Activated naive CD4-positive, alpha-beta T cell treated with anti-CD3 and anti-CD28 coated beads, Interleukin-2, amount 10 ng/mL, durations not matched to agents 7 days and 5 days (primary cell): ENCODE measurements at regions of chr17 and their contacts with region 1.

Region 1: DNA sequence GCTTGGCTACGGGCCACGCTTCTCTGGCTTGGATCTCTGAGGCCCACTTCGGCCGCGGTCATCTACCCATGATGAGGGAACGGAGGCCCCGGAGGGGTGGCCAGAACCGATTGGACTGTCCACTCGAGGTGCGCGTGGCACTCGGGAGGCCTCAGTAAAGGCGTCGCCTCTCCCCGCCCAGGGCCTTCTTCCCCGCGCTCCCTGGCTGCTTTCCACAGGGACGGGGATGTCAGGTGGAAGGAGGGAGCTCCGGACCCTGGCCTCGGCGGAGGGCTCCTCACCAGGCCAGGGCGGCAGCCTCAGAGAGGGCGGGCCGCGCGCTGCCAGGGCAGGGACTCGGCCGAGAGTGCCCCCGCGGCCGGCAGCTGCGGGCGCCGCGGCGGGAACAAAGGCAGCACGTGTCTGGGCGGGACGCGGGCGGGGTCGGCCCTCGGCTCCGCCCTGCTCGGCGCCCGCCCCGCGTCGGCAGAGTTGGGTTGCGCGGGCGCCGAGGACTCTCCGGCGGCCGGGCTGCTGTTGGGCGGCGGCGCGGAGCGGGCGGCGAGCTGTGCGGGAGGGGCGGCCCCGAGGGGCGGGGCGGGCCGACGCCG is 587 bp upstream of the CDK5R1 start:
- DNase-seq: peak; percentile 72
- H3K4me3 Mint-ChIP-seq: peak overlapping the region; percentile 64
- H3K27ac Mint-ChIP-seq: no peak overlapping the region
- H3K4me1 Mint-ChIP-seq: peaks cover 47% of the 10 kb centered on the region
- H3K27me3 Mint-ChIP-seq: peaks cover 7% of the 10 kb centered on the region

Region 2: DNA sequence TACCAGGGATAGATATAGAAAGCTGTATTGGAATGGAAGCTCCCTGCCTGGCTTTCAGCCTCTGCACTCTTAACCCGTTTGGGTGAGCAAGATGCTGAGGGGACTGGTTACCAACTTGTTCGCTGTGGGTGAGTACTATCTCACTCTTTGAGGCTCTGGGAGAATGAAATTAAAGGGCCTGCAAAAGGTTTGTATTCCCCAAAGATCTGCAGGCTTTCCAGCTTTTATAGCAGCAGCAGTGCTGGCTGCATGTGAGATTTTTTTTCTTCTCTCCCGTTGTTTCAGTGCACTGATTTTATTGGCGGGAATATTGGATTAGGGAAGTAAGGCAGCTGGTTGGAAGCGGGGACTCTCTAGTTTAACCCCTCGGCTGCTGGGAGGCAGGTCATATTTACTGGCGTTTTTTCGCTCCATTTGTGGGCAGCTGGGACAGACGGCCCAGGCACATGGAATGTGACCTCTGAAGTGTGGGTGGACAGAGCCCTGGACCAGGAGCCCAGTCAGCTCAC is 175.1 kb before region 1 on chr17:
- CTCF ChIA-PET with region 1: no interaction called
- DNase-seq: no peak
- H3K4me3 Mint-ChIP-seq: no peak overlapping the region
- H3K27ac Mint-ChIP-seq: no peak overlapping the region
- H3K4me1 Mint-ChIP-seq: peaks cover 4% of the 10 kb centered on the region
- H3K27me3 Mint-ChIP-seq: peaks cover 62% of the 10 kb centered on the region

Region 3: DNA sequence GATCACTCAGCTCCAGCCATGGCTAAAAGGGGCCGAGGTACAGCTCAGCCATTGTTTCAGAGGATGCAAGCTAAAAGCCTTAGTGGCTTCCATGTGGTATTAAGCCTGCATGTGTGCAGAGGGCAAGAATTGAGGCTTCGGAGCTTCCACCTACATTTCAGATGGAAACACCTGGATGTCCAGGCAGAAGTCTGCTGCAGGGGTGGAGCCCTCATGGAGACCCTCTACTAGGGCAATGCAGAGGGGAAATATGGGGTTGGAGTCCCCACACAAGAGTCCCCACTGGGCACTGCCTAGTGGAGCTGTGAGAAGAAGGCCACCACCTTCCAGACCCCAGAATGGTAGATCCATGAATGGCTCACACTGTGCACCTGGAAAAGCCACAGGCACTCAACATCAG is 56.6 kb before region 1 on chr17:
- CTCF ChIA-PET with region 1: no interaction called
- DNase-seq: no peak
- H3K4me3 Mint-ChIP-seq: no peak overlapping the region
- H3K27ac Mint-ChIP-seq: no peak overlapping the region
- H3K4me1 Mint-ChIP-seq: no peaks in the 10 kb centered on the region
- H3K27me3 Mint-ChIP-seq: no peaks in the 10 kb centered on the region

Region 4: DNA sequence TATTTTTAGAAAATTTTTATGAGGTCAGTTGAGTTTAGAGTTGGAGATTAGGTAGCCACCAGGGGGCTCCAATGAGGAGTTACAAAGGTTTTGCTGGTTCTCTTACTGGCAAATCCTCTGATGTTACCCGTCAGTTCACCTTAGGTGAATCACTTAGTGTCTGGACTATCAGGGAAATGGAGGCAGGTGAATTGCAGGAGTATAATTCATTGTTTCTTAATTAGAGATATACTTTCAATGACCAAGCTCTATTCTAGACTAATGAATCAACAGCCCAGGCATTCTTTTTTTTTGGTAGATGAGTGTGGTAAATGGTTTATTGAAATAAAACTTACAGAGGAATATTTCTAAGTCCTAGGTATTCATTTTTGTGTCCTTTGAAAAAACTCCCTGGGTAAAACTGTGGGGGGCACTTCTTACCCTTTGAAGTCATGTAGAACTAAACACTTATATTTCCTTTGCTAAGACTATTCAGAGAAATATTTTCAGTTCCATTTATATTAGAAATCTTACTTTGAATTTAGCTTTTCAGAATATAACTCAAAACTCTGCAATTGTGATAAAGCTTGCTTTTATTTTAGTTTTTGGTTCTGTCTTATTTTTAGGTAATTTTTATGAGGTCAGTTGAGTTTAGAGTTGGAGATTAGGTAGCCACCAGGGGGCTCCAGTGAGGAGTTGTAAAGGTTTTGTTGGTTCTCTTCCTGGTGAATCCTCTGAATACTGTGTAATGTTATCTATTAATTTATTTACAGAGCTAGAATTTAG is 24.2 kb before region 1 on chr17:
- CTCF ChIA-PET with region 1: interaction called, 51 read pairs
- DNase-seq: peak; percentile 79
- H3K4me3 Mint-ChIP-seq: no peak overlapping the region
- H3K27ac Mint-ChIP-seq: peak overlapping the region; percentile 7
- H3K4me1 Mint-ChIP-seq: peaks cover 28% of the 10 kb centered on the region
- H3K27me3 Mint-ChIP-seq: no peaks in the 10 kb centered on the region

Region 5: GRCh38 chr17:32510466-32510865 is 24.3 kb after region 1 on chr17:
- CTCF ChIA-PET with region 1: no interaction called
- DNase-seq: no peak
- H3K4me3 Mint-ChIP-seq: no peak overlapping the region
- H3K27ac Mint-ChIP-seq: no peak overlapping the region
- H3K4me1 Mint-ChIP-seq: peaks cover 33% of the 10 kb centered on the region
- H3K27me3 Mint-ChIP-seq: peaks cover 4% of the 10 kb centered on the region

Region 6: DNA sequence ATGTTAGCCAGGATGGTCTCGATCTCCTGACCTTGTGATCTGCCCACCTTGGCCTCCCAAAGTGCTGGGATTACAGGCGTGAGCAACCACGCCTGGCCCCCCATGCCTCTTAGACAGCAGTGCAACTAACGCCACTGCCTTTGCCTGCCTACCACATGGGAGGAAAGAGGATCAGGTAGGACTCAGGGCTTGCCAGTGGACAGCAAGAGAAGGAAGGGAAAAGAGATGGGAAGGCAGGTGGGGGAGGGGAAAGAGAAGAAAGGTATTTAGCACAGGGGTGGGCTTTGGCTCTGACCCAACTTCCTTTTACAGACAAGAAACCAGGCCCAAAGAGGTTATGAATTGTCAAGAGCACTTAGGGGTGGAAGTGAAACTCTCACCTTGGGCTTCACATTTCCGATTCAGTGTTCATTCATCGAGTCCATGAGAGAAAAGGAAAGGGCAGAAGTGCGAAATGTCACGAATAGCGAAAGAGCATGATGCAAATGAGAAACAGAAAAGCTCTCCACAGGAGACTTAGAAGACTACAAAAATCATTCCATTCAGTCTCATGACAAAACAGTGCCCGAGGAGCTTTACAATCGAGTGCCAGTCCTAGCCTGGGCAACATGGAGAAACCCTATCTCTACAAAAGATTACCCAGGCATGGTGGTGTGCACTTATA is 36.9 kb after region 1 on chr17:
- CTCF ChIA-PET with region 1: interaction called, 22 read pairs
- DNase-seq: peak; percentile 50
- H3K4me3 Mint-ChIP-seq: peak overlapping the region; percentile 5
- H3K27ac Mint-ChIP-seq: peak overlapping the region; percentile 89
- H3K4me1 Mint-ChIP-seq: peaks cover 71% of the 10 kb centered on the region
- H3K27me3 Mint-ChIP-seq: peaks cover 25% of the 10 kb centered on the region

Region 7: GRCh38 chr17:32609085-32609484 is 122.9 kb after region 1 on chr17:
- CTCF ChIA-PET with region 1: interaction called, 18 read pairs
- DNase-seq: peak; percentile 82
- H3K4me3 Mint-ChIP-seq: no peak overlapping the region
- H3K27ac Mint-ChIP-seq: no peak overlapping the region
- H3K4me1 Mint-ChIP-seq: peaks cover 6% of the 10 kb centered on the region
- H3K27me3 Mint-ChIP-seq: peaks cover 8% of the 10 kb centered on the region

Region 8: GRCh38 chr17:32659419-32659842 is 173.2 kb after region 1 on chr17:
- CTCF ChIA-PET with region 1: interaction called, 13 read pairs
- DNase-seq: peak; percentile 77
- H3K4me3 Mint-ChIP-seq: no peak overlapping the region
- H3K27ac Mint-ChIP-seq: no peak overlapping the region
- H3K4me1 Mint-ChIP-seq: no peaks in the 10 kb centered on the region
- H3K27me3 Mint-ChIP-seq: no peaks in the 10 kb centered on the region

Region 9: GRCh38 chr17:32755045-32755805 is 269.0 kb after region 1 on chr17:
- CTCF ChIA-PET with region 1: interaction called, 12 read pairs
- DNase-seq: no peak
- H3K4me3 Mint-ChIP-seq: no peak overlapping the region
- H3K27ac Mint-ChIP-seq: no peak overlapping the region
- H3K4me1 Mint-ChIP-seq: peaks cover 6% of the 10 kb centered on the region
- H3K27me3 Mint-ChIP-seq: no peaks in the 10 kb centered on the region